ENCODE measurements at regions of chr1 and their contacts with region 1.

Region 1: DNA sequence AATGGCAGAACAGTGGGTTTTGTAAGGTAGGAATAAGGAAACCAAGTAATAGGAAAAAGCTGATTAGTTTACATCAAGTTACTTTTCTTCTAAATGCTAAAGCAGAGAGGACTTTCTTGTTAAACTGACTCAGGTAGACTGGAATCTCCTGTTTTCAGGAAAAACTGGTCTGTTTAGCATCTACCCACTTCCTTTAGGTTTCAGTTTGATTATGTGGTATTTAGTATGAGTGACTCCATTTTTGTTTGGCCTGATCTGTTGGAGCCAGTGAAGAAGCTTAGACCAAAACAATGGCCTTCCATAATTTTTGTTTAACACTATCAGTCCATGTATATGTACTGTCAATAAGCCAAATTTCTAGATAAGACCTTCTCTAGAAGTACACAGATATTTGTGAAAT is 88.4 kb downstream of the EPB41 start:
- DNase-seq: no peak
- H3K4me3 ChIP-seq: no peak overlapping the region
- H3K27ac ChIP-seq: no peak overlapping the region
- H3K4me1 ChIP-seq: no peaks in the 10 kb centered on the region
- H3K27me3 ChIP-seq: no peaks in the 10 kb centered on the region
- CTCF ChIP-seq: no peak

Region 2: GRCh38 chr1:28905921-28906666 is 96.7 kb before region 1 on chr1:
- CTCF ChIA-PET with region 1: no interaction called
- POLR2A ChIA-PET with region 1: interaction called, 11 read pairs
- intact Hi-C with region 1: no loop called
- DNase-seq: no peak
- H3K4me3 ChIP-seq: no peak overlapping the region
- H3K27ac ChIP-seq: no peak overlapping the region
- H3K4me1 ChIP-seq: peaks cover 14% of the 10 kb centered on the region
- H3K27me3 ChIP-seq: no peaks in the 10 kb centered on the region
- CTCF ChIP-seq: no peak

Measured in A673 (cell line).